ENCODE measurements at regions of chr9 and their contacts with region 1.

Region 1: DNA sequence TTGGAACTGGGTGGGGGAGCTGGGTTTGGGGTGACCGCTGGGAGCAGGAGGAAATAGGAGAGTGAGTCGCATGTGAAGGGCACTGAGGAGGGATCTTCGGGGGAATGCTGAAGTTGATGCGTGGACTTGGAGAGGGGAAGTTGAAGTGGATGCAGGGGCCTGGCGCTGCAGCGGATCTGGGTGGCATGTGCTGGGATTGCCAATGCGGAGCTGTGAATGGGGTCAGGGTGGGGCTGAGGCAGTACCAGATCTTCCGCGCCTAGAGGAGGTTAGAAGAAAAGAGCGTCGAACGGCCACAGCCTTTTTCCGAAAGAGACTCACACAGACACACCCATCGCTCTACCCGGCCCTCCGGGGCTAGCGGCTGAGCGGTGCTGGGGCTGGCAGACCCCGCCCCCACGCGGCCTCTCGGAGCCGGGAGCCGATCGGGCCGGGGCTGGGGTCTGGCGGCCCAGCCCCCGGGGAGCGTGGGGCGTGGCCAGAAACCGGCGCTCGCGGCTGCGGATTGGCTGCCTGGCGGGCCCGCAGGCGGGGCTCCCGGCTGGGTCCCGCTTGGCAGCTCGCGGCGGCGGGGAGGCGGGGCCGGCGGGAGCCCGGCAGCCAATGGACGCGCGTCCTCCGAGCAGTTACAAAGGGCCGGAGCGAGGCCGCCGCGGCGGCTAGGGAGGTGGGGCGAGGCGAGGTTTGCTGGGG is at the start of gene TGFBR1:
- DNase-seq: peak; percentile 89
- H3K4me3 Mint-ChIP-seq: peak within 1 kb of the TSS; percentile 91
- H3K27ac Mint-ChIP-seq: peak within 1 kb of the TSS; percentile 88
- H3K4me1 Mint-ChIP-seq: peaks cover 45% of the 10 kb centered on the region
- H3K27me3 Mint-ChIP-seq: no peaks in the 10 kb centered on the region
- CTCF ChIP-seq: no peak
- total RNA-seq, gene TGFBR1: 27.6 and 29.4 TPM in 2 replicates

Region 2: GRCh38 chr9:98551511-98552286 is 552.9 kb before region 1 on chr9:
- CTCF ChIA-PET with region 1: no interaction called
- POLR2A ChIA-PET with region 1: no interaction called
- intact Hi-C with region 1: no loop called
- DNase-seq: peak; percentile 21
- H3K4me3 Mint-ChIP-seq: no peak overlapping the region
- H3K27ac Mint-ChIP-seq: no peak overlapping the region
- H3K4me1 Mint-ChIP-seq: no peaks in the 10 kb centered on the region
- H3K27me3 Mint-ChIP-seq: peaks cover 14% of the 10 kb centered on the region
- CTCF ChIP-seq: no peak

Region 3: GRCh38 chr9:99121604-99122003 is 17.0 kb after region 1 on chr9:
- CTCF ChIA-PET with region 1: interaction called, 5 read pairs
- POLR2A ChIA-PET with region 1: interaction called, 20 read pairs
- intact Hi-C with region 1: no loop called
- DNase-seq: peak; percentile 28
- H3K4me3 Mint-ChIP-seq: no peak overlapping the region
- H3K27ac Mint-ChIP-seq: no peak overlapping the region
- H3K4me1 Mint-ChIP-seq: peaks cover 18% of the 10 kb centered on the region
- H3K27me3 Mint-ChIP-seq: no peaks in the 10 kb centered on the region
- CTCF ChIP-seq: no peak

Region 4: GRCh38 chr9:99130069-99130468 is 25.5 kb after region 1 on chr9:
- CTCF ChIA-PET with region 1: interaction called, 3 read pairs
- POLR2A ChIA-PET with region 1: interaction called, 20 read pairs
- intact Hi-C with region 1: no loop called
- DNase-seq: no peak
- H3K4me3 Mint-ChIP-seq: no peak overlapping the region
- H3K27ac Mint-ChIP-seq: no peak overlapping the region
- H3K4me1 Mint-ChIP-seq: peaks cover 16% of the 10 kb centered on the region
- H3K27me3 Mint-ChIP-seq: no peaks in the 10 kb centered on the region
- CTCF ChIP-seq: no peak

Measured in MCF 10A (cell line).